ENCODE measurements at regions of chr18 and their contacts with region 1.

Region 1: GRCh38 chr18:34976899-34977837 is 64.0 kb upstream of the MAPRE2 start:
- DNase-seq: no peak
- H3K4me3 Mint-ChIP-seq: peak overlapping the region; percentile 75
- H3K27ac Mint-ChIP-seq: no peak overlapping the region
- H3K4me1 Mint-ChIP-seq: peaks cover 23% of the 10 kb centered on the region
- H3K27me3 Mint-ChIP-seq: peaks cover 47% of the 10 kb centered on the region
- CTCF ChIP-seq: no peak

Region 2: DNA sequence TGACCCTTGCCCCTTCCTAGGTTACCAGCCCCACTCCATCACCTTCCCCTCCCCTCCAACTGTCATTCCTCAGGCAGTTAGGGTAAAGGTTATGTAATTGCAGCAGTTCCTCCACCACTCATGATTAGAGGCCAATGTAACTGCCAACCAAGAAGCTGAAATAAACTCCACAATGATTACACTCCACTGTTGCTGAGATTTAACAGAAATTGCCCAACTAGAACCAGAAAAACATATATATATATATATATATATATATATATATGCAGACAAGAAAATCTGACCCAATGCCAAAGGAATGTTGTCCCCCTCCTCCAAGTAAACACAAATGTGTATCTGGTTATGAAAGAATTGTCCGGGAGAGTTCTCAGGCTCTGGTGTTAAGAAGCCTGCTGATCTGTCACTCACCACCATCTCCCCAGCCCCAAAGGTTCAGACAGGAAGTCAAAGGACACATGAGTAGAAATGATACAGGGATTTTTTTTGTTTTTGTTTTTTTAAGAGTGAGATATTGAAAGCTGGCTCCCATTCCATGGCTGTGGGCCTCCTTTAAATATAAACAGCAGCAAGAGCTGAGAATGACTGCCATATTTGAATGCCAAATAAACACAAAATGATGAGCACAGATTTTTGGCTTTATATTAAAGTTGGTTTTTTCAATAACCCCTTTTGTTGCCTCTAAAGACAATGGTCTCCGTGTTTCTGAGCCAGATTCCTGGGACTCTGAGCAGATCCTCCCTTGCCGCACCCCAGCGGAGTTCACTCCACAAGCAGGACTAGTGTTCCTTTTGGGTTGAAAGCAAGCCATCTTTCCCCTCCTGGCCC is 63.1 kb before region 1 on chr18:
- CTCF ChIA-PET with region 1: no interaction called
- POLR2A ChIA-PET with region 1: no interaction called
- intact Hi-C with region 1: no loop called
- DNase-seq: peak; percentile 13
- H3K4me3 Mint-ChIP-seq: no peak overlapping the region
- H3K27ac Mint-ChIP-seq: no peak overlapping the region
- H3K4me1 Mint-ChIP-seq: no peaks in the 10 kb centered on the region
- H3K27me3 Mint-ChIP-seq: no peaks in the 10 kb centered on the region
- CTCF ChIP-seq: no peak

Region 3: GRCh38 chr18:34933880-34934708 is 43.1 kb before region 1 on chr18:
- CTCF ChIA-PET with region 1: no interaction called
- POLR2A ChIA-PET with region 1: interaction called, 3 read pairs
- intact Hi-C with region 1: loop called (anchors 5 kb)
- DNase-seq: peak; percentile 17
- H3K4me3 Mint-ChIP-seq: no peak overlapping the region
- H3K27ac Mint-ChIP-seq: no peak overlapping the region
- H3K4me1 Mint-ChIP-seq: peaks cover 5% of the 10 kb centered on the region
- H3K27me3 Mint-ChIP-seq: peaks cover 13% of the 10 kb centered on the region
- CTCF ChIP-seq: no peak

Region 4: GRCh38 chr18:34999756-35000289 is 22.7 kb after region 1 on chr18:
- CTCF ChIA-PET with region 1: no interaction called
- POLR2A ChIA-PET with region 1: no interaction called
- intact Hi-C with region 1: no loop called
- DNase-seq: no peak
- H3K4me3 Mint-ChIP-seq: no peak overlapping the region
- H3K27ac Mint-ChIP-seq: no peak overlapping the region
- H3K4me1 Mint-ChIP-seq: no peaks in the 10 kb centered on the region
- H3K27me3 Mint-ChIP-seq: peaks cover 20% of the 10 kb centered on the region
- CTCF ChIP-seq: no peak

Region 5: DNA sequence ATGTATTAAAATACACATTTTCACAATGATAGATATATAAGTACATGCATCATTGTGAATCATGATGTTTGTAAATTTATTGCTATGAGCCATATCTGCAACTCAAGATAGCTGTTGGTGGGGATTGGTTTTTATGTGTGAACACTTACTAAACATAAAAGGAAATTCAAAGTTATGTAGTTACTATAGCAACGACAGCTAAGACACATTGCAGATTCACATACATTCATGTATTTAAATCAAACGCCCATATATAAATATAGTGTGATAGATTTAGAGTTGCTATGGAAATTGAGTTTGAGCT is 129.6 kb after region 1 on chr18:
- CTCF ChIA-PET with region 1: no interaction called
- POLR2A ChIA-PET with region 1: no interaction called
- intact Hi-C with region 1: no loop called
- DNase-seq: no peak
- H3K4me3 Mint-ChIP-seq: no peak overlapping the region
- H3K27ac Mint-ChIP-seq: no peak overlapping the region
- H3K4me1 Mint-ChIP-seq: no peaks in the 10 kb centered on the region
- H3K27me3 Mint-ChIP-seq: no peaks in the 10 kb centered on the region
- CTCF ChIP-seq: no peak